GM10248 (cell line): ENCODE measurements at regions of chr6 and their contacts with region 1.

Region 1: DNA sequence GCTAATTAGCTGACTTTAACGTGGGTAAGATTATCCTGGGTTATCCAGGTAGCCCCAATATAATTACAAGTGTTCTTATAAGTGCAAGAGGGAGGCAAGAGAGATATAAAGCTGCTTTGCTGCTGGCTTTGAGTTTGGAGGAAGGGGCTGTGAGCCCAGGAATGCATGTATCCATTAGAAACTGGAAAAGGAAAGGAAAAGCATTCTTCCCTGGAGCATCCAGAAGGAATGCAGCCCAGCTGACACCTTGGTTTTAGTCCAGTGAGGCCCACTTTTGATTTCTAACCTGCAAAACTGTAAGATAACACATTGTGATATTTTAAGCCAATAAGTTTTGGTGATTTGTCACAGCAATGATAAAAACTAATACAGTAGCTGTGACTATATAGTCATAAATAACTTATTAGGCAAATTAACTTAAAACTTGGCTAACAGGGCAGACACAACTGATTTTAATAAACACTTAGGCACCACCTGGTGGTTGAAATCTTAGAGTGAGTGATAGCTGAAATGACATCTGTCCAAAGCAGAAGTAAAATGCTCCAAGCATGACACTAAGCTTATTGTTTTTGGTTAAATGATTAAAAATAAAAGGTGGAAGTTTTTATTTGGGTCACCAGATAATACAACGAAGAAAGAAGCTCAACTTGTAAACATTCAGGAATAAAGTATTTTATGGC is 35.6 kb downstream of the ADGRF4 start:
- DNase-seq: peak; percentile 24
- CTCF ChIP-seq: peak; percentile 57

Region 2: DNA sequence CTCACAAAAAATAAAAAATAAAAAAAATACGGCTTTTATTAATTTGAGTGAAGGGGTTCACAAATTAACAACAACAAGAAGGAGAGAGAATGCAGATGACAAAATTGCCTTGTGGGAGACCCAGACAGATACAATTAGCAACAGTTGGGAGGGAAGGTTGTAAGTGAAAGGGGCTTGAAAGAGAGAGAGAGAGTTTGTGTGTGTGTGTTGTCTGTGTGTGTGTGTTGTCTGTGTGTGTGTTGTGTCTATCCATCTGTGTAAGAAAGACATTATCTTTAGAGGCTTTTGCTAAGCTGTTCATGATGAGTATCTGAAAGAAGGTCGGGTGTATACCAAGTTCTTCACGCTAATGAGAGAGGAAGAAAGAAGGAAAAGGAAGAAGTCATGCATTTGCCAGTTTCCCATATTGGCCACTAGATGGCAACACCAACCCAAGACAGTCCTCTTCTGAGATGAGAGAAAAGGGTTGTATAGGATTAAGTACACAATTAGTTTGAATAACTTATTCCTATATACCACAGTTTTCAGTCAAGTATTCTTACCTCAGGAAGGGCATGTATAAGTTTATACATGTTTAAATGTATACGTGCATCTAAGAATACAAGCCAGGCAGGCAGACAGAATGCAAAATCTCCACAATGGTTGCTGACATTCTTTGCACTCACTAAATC is 320.1 kb before region 1 on chr6:
- CTCF ChIA-PET with region 1: interaction called, 28 read pairs
- POLR2A ChIA-PET with region 1: no interaction called
- DNase-seq: peak; percentile 57
- CTCF ChIP-seq: peak; percentile 88

Region 3: DNA sequence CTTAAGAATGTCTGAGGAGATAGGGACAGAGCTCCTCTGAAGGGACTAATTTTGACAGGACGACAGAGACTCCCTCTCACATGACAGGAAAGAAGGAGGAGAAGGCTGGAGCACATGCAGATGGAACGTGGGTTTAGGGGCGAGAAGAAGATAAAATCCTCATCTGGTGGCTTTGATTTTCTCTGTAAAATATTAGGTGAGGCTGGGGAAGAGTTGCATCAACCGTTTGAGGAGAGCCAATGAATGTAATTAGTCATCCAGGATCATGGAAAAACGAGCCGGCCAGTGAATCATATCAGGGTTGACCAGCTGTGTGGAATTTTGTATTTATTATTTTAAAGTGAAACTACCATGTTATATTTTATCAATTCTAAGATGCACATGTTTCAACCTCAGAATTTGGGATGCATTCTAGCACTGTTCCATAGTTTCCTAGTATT is 82.5 kb before region 1 on chr6:
- CTCF ChIA-PET with region 1: interaction called, 11 read pairs
- POLR2A ChIA-PET with region 1: no interaction called
- DNase-seq: no peak
- CTCF ChIP-seq: no peak

Region 4: DNA sequence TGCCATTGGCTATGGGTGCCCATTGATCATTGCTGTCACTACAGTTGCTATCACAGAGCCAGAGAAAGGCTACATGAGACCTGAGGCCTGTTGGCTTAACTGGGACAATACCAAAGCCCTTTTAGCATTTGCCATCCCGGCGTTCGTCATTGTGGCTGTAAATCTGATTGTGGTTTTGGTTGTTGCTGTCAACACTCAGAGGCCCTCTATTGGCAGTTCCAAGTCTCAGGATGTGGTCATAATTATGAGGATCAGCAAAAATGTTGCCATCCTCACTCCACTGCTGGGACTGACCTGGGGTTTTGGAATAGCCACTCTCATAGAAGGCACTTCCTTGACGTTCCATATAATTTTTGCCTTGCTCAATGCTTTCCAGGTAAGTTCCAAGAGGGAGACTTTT is 19.2 kb before region 1 on chr6:
- CTCF ChIA-PET with region 1: interaction called, 23 read pairs
- POLR2A ChIA-PET with region 1: no interaction called
- DNase-seq: no peak
- CTCF ChIP-seq: no peak

Region 5: DNA sequence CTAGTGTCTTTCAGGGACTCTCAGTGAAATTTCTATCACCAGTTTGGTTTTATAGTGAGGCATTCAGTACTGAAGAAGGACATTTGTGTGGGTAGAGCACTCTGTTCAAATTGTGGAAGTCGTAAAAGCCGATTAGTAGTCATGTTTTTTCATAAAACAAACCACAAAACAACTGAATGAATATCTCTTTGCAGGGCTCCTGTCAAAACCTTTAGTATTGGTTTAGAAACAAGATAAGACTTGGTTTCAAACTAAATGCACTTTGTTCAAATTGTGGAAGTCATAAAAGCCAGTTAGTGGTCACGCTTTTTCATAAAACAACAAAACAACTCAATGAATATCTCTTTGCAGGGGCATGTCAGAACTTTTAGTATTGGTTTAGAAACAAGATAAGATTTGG is 11.8 kb before region 1 on chr6:
- CTCF ChIA-PET with region 1: interaction called, 23 read pairs
- POLR2A ChIA-PET with region 1: no interaction called
- DNase-seq: peak; percentile 20
- CTCF ChIP-seq: no peak

Region 6: DNA sequence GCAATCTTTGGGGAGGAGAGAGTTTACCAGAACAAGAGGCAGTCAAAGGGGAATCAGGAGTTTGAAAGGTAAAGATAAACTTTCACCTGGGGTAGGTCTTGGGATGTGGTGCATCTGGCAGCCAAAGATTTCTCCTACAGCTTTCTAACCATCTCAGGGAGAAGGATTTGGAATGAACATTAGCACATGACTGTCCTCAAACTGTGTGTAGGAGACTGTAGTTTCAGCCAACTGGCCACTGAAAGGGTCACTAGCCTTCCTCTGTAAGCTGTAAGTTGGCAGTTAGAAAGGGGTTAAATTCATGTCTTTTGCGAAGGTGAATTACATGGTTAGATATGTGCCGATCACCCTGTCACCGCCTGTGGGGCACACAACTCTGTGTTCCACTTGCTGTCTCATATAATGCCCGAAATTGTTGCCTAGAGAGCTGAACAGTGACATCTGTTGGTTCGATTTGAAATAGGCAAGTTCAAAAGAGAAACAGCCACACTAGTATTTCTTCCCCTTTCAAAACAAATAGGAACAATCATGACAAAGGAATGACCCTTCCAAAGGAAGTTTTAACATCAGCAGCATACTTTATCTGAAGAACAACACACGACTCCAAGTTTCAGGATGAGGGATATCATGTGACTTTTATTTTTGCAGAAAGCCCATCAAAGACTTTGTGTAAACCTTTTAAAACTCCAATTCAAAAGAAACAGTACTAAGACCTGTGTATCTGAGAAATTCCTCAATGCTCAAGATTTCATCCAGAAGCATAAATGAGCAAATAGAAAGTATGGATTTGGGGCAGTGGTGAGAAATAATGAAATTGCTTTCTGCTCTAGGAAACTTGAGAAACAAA is 46.7 kb after region 1 on chr6:
- CTCF ChIA-PET with region 1: interaction called, 12 read pairs
- POLR2A ChIA-PET with region 1: no interaction called
- DNase-seq: peak; percentile 44
- CTCF ChIP-seq: peak; percentile 57